Dendritic cell treated with granulocyte-macrophage colony-stimulating factor and Interleukin-4, amounts not matched to agents 40 ng/mL and 50 ng/mL, for 4 days (primary cell): ENCODE measurements at regions of chr13 and their contacts with region 1.

Region 1: DNA sequence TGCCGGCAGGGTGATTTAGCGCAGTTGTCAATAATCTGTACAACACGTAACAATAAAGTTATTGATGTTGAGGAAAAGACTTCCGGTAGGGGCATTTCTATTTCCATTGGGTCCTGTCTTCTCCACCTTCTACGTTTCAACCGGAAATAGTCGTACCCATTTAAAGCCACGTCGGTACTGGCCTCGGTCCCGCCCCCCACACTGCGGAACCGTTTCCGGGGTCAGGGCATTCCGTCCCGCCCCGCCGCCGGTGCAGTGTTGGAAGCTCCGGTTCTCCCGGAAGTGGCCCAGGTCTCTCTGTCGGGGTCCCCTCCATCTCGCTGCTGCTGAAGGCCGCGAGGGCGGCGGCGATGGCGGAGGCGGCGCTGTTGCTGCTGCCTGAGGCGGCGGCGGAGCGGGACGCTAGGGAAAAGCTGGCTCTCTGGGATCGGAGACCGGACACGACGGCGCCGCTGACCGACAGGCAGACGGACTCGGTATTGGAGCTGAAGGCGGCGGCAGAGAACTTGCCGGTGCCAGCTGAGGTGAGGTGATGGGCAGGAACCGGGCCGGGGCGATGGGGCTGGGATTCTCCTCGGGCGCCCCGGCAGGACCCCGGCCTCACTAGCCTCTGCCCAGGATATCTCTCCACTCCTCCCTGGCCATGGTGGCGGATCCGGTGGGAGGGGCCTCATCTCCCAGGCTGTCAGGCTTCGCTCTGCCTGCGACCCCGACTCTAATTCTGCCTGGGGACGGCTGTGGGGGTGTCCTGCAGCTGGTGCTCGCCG is at the start of gene COG3:
- H3K4me3 Mint-ChIP-seq: peak within 1 kb of the TSS; percentile 91
- H3K27ac Mint-ChIP-seq: peak within 1 kb of the TSS; percentile 96
- H3K4me1 Mint-ChIP-seq: peaks cover 30% of the 10 kb centered on the region
- H3K27me3 Mint-ChIP-seq: no peaks in the 10 kb centered on the region

Region 2: DNA sequence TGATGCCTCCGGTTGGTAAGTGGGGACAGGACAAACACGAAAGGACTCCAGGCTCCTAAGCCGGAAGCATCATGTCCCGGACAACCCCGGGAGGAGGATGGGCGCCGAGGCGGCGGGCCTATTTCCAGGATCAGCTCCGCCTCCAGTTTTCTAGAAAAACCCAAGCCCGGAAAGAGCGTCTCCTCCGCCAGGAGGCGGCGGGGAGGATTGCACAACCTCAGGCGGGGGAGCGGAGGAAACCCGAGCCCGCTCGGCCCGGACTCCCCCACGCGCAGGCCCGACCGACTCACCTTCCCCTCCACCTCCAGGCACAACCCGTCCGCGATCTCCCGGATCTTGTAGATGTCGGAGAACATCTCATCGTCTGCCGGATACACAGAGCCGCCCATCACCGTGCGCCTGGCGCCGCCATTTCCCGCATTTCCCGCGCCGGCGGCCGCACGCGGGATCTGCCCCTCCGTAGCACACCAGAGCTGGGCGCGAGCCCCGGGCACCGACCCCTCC is 124.4 kb before region 1 on chr13:
- intact Hi-C with region 1: loop called (anchors 10 kb)
- H3K4me3 Mint-ChIP-seq: peak overlapping the region; percentile 91
- H3K27ac Mint-ChIP-seq: peak overlapping the region; percentile 99
- H3K4me1 Mint-ChIP-seq: peaks cover 43% of the 10 kb centered on the region
- H3K27me3 Mint-ChIP-seq: no peaks in the 10 kb centered on the region

Region 3: GRCh38 chr13:45356966-45357672 is 107.8 kb before region 1 on chr13:
- intact Hi-C with region 1: no loop called
- H3K4me3 Mint-ChIP-seq: no peak overlapping the region
- H3K27ac Mint-ChIP-seq: peak overlapping the region; percentile 35
- H3K4me1 Mint-ChIP-seq: peaks cover 30% of the 10 kb centered on the region
- H3K27me3 Mint-ChIP-seq: no peaks in the 10 kb centered on the region

Region 4: GRCh38 chr13:45370922-45371406 is 93.9 kb before region 1 on chr13:
- intact Hi-C with region 1: loop called (anchors 10 kb)
- H3K4me3 Mint-ChIP-seq: no peak overlapping the region
- H3K27ac Mint-ChIP-seq: peak overlapping the region; percentile 35
- H3K4me1 Mint-ChIP-seq: peaks cover 27% of the 10 kb centered on the region
- H3K27me3 Mint-ChIP-seq: peaks cover 11% of the 10 kb centered on the region

Region 5: GRCh38 chr13:45417790-45418534 is 46.9 kb before region 1 on chr13 and contains the start of gene SLC25A30:
- intact Hi-C with region 1: loop called (anchors 1 kb)
- H3K4me3 Mint-ChIP-seq: peak within 1 kb of the TSS; percentile 99
- H3K27ac Mint-ChIP-seq: peak within 1 kb of the TSS; percentile 94
- H3K4me1 Mint-ChIP-seq: peaks cover 21% of the 10 kb centered on the region
- H3K27me3 Mint-ChIP-seq: peaks cover 1% of the 10 kb centered on the region

Region 6: DNA sequence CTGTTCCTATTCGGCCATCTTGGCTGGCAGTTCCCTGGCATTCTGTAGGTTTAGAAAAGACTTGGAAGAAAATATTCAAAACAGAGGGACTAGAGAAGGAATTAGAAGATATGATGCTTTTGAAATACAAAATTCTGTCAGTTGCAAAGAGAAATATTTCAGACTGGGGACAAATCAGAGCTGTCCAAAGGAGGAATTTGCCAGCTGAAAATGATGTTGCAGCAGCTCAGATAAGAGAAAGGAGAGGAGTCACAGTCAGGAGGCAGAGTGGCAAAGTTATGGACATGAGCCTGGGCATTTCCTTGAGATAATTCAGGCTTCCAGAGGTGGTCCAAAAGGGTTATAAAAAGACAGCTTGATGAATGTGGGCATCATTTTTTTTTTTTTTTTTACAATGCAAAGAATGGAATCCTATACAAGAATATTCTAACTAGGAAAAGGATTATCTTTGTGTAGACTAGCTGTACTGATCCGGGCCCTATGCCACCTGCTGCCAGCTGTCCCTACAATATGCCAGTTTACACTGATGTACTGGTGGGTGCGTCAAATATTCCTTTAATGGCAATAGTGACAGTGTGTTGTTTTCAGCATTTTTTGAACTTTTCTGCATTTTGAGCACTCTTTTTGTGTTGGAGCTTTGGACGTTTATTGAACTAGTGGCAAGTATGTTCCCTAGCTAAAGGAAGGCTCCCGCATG is 205.5 kb after region 1 on chr13:
- intact Hi-C with region 1: no loop called
- H3K4me3 Mint-ChIP-seq: no peak overlapping the region
- H3K27ac Mint-ChIP-seq: no peak overlapping the region
- H3K4me1 Mint-ChIP-seq: peaks cover 8% of the 10 kb centered on the region
- H3K27me3 Mint-ChIP-seq: peaks cover 13% of the 10 kb centered on the region